Activated CD4-positive, alpha-beta T cell treated with anti-CD3 and anti-CD28 coated beads for 36 hours (primary cell): ENCODE measurements at regions of chr5 and their contacts with region 1.

Region 1: DNA sequence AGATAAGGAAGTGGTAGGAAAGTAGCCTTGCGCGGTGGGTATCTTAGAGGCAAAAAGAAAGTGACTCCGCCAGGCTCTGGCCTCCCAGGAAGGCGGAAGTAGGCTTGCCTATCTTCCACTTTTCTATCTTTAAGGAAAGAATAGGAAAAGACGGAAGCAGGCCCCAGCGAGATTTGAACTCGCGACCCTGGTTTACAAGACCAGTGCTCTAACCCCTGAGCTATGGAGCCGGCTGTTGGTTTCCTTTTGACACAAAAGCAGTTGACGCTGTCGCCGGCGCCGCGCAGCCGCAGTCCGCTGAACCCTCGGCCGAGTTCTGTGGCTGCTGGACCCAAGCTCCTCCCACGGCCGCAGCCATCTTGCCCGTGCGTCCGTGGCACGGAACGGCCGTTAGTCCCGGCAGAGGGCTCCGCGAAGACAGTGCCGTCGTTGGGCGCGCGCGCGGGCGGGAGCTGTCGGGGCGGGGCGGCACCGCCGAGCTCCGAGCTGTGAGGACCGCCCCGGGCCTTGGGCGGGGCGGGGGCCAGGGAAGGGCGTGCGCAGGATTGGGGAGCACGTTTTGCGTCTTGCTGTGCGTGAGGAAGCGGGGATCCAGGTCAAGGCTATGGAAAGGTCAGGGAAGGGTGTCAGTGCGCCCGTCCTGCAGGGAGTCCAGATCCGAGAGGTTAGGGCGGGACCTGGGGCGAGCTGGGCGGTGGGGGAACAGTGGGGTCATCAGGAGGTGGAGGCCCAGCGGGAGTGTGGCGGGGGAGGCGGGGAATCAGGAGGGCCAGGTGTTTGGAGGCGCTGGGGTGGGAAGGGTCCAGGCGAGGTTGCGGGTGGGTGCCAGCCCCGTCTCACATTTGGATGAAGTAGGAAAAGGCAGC is 13.2 kb downstream of the TRIM7 start:
- DNase-seq: peak; percentile 96
- ATAC-seq: peak; percentile 68
- H3K4me3 Mint-ChIP-seq: peak overlapping the region; percentile 88
- H3K27ac Mint-ChIP-seq: peak overlapping the region; percentile 97
- H3K4me1 Mint-ChIP-seq: peaks cover 29% of the 10 kb centered on the region
- H3K27me3 Mint-ChIP-seq: no peaks in the 10 kb centered on the region

Region 2: DNA sequence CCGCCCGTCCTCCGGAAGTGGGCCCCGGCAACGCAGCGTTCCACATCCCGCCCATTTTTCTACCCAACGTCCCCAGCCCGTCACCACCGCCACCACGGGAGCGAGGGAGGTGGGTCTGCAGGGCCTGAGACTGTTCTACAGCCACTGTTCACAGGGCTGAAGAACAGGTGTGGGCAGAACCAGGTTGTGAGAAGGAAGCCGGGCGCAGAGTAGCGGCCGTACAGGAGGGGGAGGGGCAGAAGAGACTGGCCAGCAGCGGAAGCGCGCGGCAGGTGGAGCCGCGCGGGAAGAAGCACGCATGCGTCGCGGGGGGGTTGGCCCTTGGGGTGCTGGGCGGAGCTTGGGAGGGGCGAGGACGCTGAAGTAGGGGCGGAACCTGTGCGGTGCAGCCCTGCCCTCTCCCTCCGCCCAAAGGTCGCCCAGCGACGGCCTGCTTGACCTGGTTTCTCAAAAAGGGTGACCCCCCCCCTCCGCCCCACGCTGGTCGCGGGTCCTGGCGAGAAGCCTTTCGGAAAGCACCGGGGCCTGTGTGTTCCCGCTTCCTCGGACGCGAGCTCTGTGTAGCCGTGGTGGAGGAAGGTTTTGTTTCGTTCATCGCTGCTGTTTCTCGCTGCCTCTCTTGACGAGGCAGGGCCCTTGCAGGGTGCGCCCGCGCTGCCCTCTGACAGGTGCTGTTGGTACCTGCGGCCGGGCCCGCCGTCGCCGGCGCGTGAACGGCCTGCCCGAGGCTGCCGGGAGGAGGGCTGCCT is 381.4 kb before region 1 on chr5:
- CTCF ChIA-PET with region 1: no interaction called
- POLR2A ChIA-PET with region 1: no interaction called
- intact Hi-C with region 1: loop called in 1 of 2 experiments (anchors 1 kb)
- DNase-seq: peak; percentile 98
- ATAC-seq: peak; percentile 79
- H3K4me3 Mint-ChIP-seq: peak overlapping the region; percentile 91
- H3K27ac Mint-ChIP-seq: peak overlapping the region; percentile 97
- H3K4me1 Mint-ChIP-seq: peaks cover 72% of the 10 kb centered on the region
- H3K27me3 Mint-ChIP-seq: no peaks in the 10 kb centered on the region

Region 3: GRCh38 chr5:180990882-180991242 is 200.9 kb before region 1 on chr5:
- CTCF ChIA-PET with region 1: no interaction called
- POLR2A ChIA-PET with region 1: no interaction called
- intact Hi-C with region 1: no loop called
- DNase-seq: no peak
- ATAC-seq: no peak
- H3K4me3 Mint-ChIP-seq: no peak overlapping the region
- H3K27ac Mint-ChIP-seq: no peak overlapping the region
- H3K4me1 Mint-ChIP-seq: no peaks in the 10 kb centered on the region
- H3K27me3 Mint-ChIP-seq: peaks cover 19% of the 10 kb centered on the region

Region 4: DNA sequence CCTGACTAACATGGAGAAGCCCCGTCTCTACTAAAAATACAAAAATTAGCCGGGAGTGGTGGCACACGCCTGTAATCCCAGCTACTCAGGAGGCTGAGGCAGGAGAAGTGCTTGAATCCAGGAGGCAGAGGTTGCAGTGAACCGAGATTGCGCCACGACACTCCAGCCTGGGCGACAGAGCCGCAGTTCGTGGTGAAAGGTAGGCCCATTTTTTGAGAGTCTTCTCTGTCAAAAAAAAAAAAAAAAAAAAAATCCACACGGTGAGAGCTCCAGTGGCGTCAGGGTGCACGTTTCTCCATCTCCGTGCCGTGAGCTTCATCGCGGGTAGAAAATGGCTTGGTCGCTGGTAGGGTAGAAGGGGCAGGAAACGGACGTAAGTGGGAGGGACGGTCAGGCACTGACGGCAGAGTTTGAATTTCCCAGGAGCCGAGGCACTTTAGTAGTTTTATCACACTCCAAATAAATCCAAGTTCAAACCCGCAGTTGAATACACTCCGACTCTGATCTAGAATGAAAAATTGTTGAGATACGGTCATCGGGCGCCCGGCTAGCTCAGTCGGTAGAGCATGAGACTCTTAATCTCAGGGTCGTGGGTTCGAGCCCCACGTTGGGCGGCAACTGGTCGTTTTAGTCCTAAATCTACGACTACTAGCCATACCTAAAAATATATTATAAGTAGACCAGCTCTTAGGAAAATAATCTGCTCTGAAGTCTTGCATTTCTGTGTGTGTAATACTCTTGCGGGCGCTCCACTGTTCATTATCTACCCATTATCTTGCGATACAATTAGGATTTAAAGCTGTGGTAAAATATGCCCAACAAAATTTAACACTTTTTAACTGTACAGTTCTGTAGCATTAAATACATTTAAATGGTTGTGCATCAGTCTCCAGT is 15.7 kb after region 1 on chr5:
- CTCF ChIA-PET with region 1: interaction called, 63 read pairs
- POLR2A ChIA-PET with region 1: interaction called, 24 read pairs
- intact Hi-C with region 1: loop called (anchors 1 kb)
- DNase-seq: peak; percentile 93
- ATAC-seq: peak; percentile 51
- H3K4me3 Mint-ChIP-seq: peak overlapping the region; percentile 87
- H3K27ac Mint-ChIP-seq: peak overlapping the region; percentile 93
- H3K4me1 Mint-ChIP-seq: peaks cover 32% of the 10 kb centered on the region
- H3K27me3 Mint-ChIP-seq: peaks cover 20% of the 10 kb centered on the region

Region 5: GRCh38 chr5:181223058-181223728 is 31.4 kb after region 1 on chr5 and contains the start of gene TRIM41:
- CTCF ChIA-PET with region 1: interaction called, 5 read pairs
- POLR2A ChIA-PET with region 1: interaction called, 9 read pairs
- intact Hi-C with region 1: loop called (anchors 1 kb)
- DNase-seq: peak; percentile 98
- ATAC-seq: peak; percentile 64
- H3K4me3 Mint-ChIP-seq: peak within 1 kb of the TSS; percentile 87
- H3K27ac Mint-ChIP-seq: peak within 1 kb of the TSS; percentile 95
- H3K4me1 Mint-ChIP-seq: peaks cover 56% of the 10 kb centered on the region
- H3K27me3 Mint-ChIP-seq: no peaks in the 10 kb centered on the region
- total RNA-seq, gene TRIM41: 27.0 to 30.7 TPM

Region 6: DNA sequence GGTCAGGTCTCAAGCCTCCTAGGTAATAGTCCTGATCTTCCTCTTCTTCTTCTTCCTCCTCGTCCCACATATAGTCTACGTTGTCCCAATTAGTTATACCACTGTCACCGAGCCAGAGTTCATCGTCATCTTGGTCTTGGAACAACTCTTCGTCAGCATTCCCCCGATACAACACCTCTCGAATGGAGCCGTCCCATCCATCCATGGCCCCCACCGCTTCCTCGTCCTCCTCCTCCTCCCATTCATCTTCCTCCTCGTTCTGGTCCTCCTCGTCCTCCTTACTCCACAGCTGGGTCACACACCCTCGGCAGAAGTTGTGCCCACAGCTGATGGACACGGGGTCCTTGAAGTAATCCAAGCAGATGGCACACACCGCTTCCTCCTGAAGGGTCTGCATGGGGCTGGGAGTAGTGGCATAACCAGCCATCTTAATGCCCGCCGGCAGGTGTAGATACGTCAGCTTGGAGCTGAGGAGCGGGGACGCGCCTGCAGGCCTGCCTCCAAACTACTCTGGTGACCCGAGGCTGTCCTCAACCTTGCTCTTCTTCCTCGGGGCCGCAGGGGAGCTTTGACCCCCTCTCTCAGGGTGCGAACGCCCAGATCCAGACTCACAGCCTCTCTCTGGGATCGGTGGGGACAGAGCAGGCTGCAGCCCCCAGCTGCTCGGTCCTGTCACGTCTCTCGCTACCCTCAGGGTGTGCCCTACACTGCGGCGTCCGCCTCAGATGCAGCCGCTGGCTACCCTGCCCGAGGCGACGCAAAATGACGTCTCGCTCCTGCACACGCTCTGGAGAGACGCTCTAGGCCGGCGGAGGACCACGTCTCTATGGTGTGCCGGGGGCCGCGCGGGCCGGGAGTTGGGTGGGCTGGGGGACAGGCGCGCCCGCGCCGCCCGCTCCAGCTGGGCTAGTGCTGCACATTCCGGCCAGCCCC is 68.9 kb after region 1 on chr5 and contains the start of gene TRIM52:
- CTCF ChIA-PET with region 1: interaction called, 7 read pairs
- POLR2A ChIA-PET with region 1: interaction called, 5 read pairs
- intact Hi-C with region 1: loop called in 1 of 2 experiments (anchors 1 kb)
- DNase-seq: peak; percentile 95
- ATAC-seq: peak; percentile 85
- H3K4me3 Mint-ChIP-seq: peak within 1 kb of the TSS; percentile 91
- H3K27ac Mint-ChIP-seq: peak within 1 kb of the TSS; percentile 95
- H3K4me1 Mint-ChIP-seq: peaks cover 38% of the 10 kb centered on the region
- H3K27me3 Mint-ChIP-seq: no peaks in the 10 kb centered on the region
- total RNA-seq, gene TRIM52: 10.4 to 13.1 TPM